HCT116 (cell line): ENCODE measurements at regions of chr14 and their contacts with region 1.

Region 1: DNA sequence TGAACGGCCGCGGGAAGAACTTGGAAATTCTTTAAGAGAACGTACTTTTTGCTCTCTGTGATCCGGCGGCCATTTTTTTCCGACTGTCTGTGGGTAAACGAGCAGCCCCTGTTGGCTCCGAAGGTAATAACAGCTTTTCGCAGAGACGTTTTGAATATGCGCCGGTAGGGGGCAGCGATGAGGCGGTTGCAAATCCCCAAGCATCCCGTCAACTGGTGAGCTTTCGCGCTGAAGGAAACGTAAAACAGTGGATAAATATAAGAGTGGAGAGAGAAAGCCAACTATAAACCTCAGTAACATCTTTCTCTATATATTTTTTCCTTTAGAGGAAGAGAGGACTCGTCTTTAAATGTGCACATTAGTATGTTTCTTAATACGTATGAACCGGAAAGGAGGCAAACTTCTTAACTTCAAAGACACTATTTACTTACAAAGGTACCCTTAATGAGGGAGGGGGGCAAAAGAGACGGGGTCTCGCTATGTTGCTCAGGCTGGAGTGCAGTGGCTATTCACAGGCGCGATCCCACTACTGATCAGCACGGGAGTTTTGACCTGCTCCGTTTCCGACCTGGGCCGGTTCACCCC is 9.6 kb upstream of the NEMF start:
- DNase-seq: peak; percentile 82
- ATAC-seq: peak; percentile 63
- H3K4me3 ChIP-seq: peak overlapping the region; percentile 77 to 80
- H3K27ac ChIP-seq: peak overlapping the region; percentile 74
- H3K4me1 ChIP-seq: peaks cover 9 to 41% of the 10 kb centered on the region in 2 experiments; a peak in 3 of 4 replicates
- H3K27me3 ChIP-seq: no peaks in the 10 kb centered on the region
- CTCF ChIP-seq: peak; percentile 100
- POLR2A ChIP-seq: no peak
- RAD21 ChIP-seq: peak; percentile 64

Region 2: GRCh38 chr14:50231475-50232275 is 369.5 kb after region 1 on chr14 and contains the start of gene SOS2:
- CTCF ChIA-PET with region 1: no interaction called
- POLR2A ChIA-PET with region 1: no interaction called
- RAD21 ChIA-PET with region 1: no interaction called
- intact Hi-C with region 1: loop called (anchors 2 kb)
- DNase-seq: peak; percentile 62
- ATAC-seq: peak; percentile 92
- H3K4me3 ChIP-seq: peak within 1 kb of the TSS; percentile 76 to 83
- H3K27ac ChIP-seq: peak within 1 kb of the TSS; percentile 76
- H3K4me1 ChIP-seq: peaks cover 15 to 21% of the 10 kb centered on the region in 2 experiments; a peak in 3 of 4 replicates
- H3K27me3 ChIP-seq: no peaks in the 10 kb centered on the region
- CTCF ChIP-seq: no peak
- POLR2A ChIP-seq: peak; percentile 62
- RAD21 ChIP-seq: no peak
- total RNA-seq, gene SOS2: 11.7 TPM

Region 3: DNA sequence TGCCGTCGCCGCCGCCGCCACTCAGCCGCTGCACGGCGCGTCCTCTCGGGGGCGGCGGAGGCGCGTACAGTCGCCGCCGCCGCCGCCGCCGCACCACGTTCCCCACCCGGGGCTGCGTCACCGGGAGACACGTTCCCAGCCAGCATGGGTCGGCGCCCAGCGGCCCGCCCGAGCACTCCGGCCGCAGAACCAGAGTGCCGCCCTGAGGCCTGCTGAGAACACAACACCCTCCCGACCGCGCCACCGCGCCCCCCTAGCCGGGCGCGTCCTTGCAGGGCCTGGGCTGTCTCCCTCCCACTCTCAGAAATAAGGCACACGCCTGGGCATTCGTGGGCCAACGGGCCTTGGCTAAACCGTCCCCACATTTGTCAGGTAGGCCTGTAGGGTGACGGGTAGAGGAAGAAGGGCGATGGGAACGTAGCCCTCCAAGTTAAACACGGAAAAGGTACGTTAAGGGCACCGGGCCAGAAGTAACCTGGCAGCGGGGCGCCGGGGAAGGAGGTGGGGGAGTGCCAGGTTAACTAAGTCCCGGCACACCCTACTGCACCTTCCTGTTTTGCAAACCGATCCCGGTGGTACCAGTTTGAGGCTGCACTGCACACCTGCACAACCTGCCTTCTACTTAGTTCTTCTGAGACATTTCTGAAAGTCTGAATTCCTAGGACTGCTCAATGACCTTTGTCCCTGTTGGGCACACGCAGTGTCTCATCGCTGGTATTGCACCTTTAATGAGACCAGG is 670.5 kb after region 1 on chr14 and contains the start of gene MAP4K5:
- CTCF ChIA-PET with region 1: no interaction called
- POLR2A ChIA-PET with region 1: no interaction called
- RAD21 ChIA-PET with region 1: no interaction called
- intact Hi-C with region 1: loop called (anchors 5 kb)
- DNase-seq: peak; percentile 76
- ATAC-seq: peak; percentile 94
- H3K4me3 ChIP-seq: peak within 1 kb of the TSS; percentile 76 to 81
- H3K27ac ChIP-seq: peak within 1 kb of the TSS; percentile 88
- H3K4me1 ChIP-seq: peaks cover 9 to 27% of the 10 kb centered on the region in 2 experiments; a peak in 3 of 4 replicates
- H3K27me3 ChIP-seq: no peaks in the 10 kb centered on the region
- CTCF ChIP-seq: peak; percentile 79 to 89 (median 83)
- POLR2A ChIP-seq: peak; percentile 56
- RAD21 ChIP-seq: peak; percentile 97
- total RNA-seq, gene MAP4K5: 39.1 TPM